Caco-2 (cell line): ENCODE measurements at regions of chr11 and their contacts with region 1.

Region 1: GRCh38 chr11:84384731-84385130 is 1098.6 kb upstream of the CCDC90B start:
- DNase-seq: peak; percentile 60 to 68
- H3K4me3 ChIP-seq: no peak overlapping the region
- H3K4me3 Mint-ChIP-seq: no peak overlapping the region
- H3K27ac Mint-ChIP-seq: no peak overlapping the region
- H3K4me1 ChIP-seq: no peaks in the 10 kb centered on the region
- H3K4me1 Mint-ChIP-seq: no peaks in the 10 kb centered on the region
- H3K27me3 ChIP-seq: no peaks in the 10 kb centered on the region; the same call in 1 of the 2 replicates
- H3K27me3 Mint-ChIP-seq: no peaks in the 10 kb centered on the region
- CTCF ChIP-seq: peak; percentile 93 to 96

Region 2: GRCh38 chr11:84543367-84544159 is 158.8 kb after region 1 on chr11:
- CTCF ChIA-PET with region 1: no interaction called
- POLR2A ChIA-PET with region 1: no interaction called
- intact Hi-C with region 1: loop called (anchors 1 kb)
- DNase-seq: peak in 1 of 2 experiments; percentile 23
- H3K4me3 ChIP-seq: no peak overlapping the region
- H3K4me3 Mint-ChIP-seq: no peak overlapping the region
- H3K27ac Mint-ChIP-seq: no peak overlapping the region
- H3K4me1 ChIP-seq: no peaks in the 10 kb centered on the region
- H3K4me1 Mint-ChIP-seq: no peaks in the 10 kb centered on the region
- H3K27me3 ChIP-seq: no peaks in the 10 kb centered on the region
- H3K27me3 Mint-ChIP-seq: peaks cover 13% of the 10 kb centered on the region
- CTCF ChIP-seq: peak in 1 of 2 experiments; percentile 17